MCF 10A (cell line): ENCODE measurements at regions of chr11 and their contacts with region 1.

Region 1: GRCh38 chr11:32154275-32154674 is 63.4 kb downstream of the RCN1 start:
- DNase-seq: peak; percentile 46
- H3K4me3 Mint-ChIP-seq: no peak overlapping the region
- H3K27ac Mint-ChIP-seq: no peak overlapping the region
- H3K4me1 Mint-ChIP-seq: no peaks in the 10 kb centered on the region
- H3K27me3 Mint-ChIP-seq: peaks cover 52% of the 10 kb centered on the region
- CTCF ChIP-seq: peak; percentile 37

Region 2: DNA sequence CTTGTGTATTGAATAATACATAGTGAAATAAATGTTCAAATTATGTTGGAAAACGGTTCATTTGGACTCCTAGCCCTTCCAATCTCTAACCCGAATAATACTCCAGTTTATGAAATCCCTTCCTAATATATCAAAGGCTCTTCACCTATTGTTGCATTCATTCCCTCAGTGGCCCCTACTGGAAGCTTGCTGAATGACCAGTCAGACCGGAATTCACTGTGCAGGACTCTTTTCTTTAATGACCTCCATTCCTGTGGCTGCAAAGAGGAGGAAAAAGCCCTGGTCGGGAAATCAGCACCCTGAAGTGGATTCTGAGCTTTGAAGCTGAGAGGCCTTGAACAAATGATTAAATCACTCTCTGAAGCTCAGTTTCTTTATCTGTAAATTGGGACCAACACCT is 82.5 kb before region 1 on chr11:
- CTCF ChIA-PET with region 1: no interaction called
- POLR2A ChIA-PET with region 1: no interaction called
- intact Hi-C with region 1: loop called (anchors 5 kb)
- DNase-seq: peak; percentile 57
- H3K4me3 Mint-ChIP-seq: no peak overlapping the region
- H3K27ac Mint-ChIP-seq: no peak overlapping the region
- H3K4me1 Mint-ChIP-seq: no peaks in the 10 kb centered on the region
- H3K27me3 Mint-ChIP-seq: peaks cover 66% of the 10 kb centered on the region
- CTCF ChIP-seq: peak; percentile 35